ENCODE measurements at regions of chr11 and their contacts with region 1.

Region 1: GRCh38 chr11:68257475-68258362 is 14.1 kb downstream of the C11orf24 start:
- DNase-seq: peak; percentile 97
- ATAC-seq: peak; percentile 97
- H3K4me3 Mint-ChIP-seq: no peak overlapping the region
- H3K27ac Mint-ChIP-seq: no peak overlapping the region
- H3K4me1 Mint-ChIP-seq: peaks cover 3% of the 10 kb centered on the region
- H3K27me3 Mint-ChIP-seq: no peaks in the 10 kb centered on the region

Region 2: GRCh38 chr11:67732045-67732787 is 525.5 kb before region 1 on chr11:
- CTCF ChIA-PET with region 1: no interaction called
- POLR2A ChIA-PET with region 1: no interaction called
- intact Hi-C with region 1: no loop called
- DNase-seq: peak; percentile 72
- ATAC-seq: peak; percentile 90
- H3K4me3 Mint-ChIP-seq: no peak overlapping the region
- H3K27ac Mint-ChIP-seq: no peak overlapping the region
- H3K4me1 Mint-ChIP-seq: peaks cover 14% of the 10 kb centered on the region
- H3K27me3 Mint-ChIP-seq: peaks cover 19% of the 10 kb centered on the region

Region 3: DNA sequence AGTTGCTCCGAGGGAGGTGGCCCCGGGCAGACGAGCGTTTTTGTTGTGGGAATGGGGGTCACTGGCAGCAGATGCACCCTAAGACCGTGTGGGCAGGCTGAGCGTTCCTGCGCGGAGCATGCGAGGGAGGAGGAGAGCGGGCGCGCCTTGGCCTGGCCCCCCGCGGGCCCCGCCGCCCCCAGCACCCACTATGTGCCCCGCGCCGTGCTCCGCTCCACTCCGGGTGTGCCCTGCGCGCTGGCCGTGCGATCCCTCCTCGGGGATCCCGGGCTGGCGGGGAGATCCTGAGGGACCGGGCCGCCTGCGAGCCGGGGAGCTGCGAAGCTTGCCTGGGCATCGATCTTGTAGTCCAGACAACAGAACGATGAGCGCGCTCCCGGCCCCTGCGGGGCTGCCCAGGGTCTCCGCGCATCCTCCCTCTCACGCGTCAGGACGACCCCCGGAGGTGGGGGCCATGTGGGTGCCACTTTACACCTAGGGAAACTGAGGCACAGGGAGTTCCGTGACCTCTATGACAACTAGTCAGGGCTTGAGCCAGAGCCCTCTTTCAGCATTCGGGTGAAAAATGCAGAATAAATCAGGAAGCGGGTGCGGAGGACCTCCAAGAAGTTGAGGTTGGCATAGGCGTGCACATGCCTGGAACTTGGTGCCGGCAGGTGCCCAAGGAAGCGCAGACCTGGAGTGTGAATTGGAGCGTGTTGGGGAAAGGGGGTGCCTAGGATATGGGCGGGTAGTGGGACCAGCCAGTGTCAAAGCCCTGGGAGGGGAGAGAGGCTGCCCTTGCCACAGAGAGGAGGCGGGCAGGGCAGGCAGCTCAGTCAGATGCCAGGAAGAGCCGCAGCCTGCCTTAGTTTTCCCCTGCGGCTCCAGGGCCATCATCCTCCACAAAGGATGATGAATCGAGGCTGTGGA is 43.3 kb before region 1 on chr11:
- CTCF ChIA-PET with region 1: no interaction called
- POLR2A ChIA-PET with region 1: no interaction called
- intact Hi-C with region 1: no loop called
- DNase-seq: peak; percentile 32
- ATAC-seq: peak; percentile 5
- H3K4me3 Mint-ChIP-seq: peak overlapping the region; percentile 71
- H3K27ac Mint-ChIP-seq: no peak overlapping the region
- H3K4me1 Mint-ChIP-seq: peaks cover 41% of the 10 kb centered on the region
- H3K27me3 Mint-ChIP-seq: peaks cover 2% of the 10 kb centered on the region

Region 4: DNA sequence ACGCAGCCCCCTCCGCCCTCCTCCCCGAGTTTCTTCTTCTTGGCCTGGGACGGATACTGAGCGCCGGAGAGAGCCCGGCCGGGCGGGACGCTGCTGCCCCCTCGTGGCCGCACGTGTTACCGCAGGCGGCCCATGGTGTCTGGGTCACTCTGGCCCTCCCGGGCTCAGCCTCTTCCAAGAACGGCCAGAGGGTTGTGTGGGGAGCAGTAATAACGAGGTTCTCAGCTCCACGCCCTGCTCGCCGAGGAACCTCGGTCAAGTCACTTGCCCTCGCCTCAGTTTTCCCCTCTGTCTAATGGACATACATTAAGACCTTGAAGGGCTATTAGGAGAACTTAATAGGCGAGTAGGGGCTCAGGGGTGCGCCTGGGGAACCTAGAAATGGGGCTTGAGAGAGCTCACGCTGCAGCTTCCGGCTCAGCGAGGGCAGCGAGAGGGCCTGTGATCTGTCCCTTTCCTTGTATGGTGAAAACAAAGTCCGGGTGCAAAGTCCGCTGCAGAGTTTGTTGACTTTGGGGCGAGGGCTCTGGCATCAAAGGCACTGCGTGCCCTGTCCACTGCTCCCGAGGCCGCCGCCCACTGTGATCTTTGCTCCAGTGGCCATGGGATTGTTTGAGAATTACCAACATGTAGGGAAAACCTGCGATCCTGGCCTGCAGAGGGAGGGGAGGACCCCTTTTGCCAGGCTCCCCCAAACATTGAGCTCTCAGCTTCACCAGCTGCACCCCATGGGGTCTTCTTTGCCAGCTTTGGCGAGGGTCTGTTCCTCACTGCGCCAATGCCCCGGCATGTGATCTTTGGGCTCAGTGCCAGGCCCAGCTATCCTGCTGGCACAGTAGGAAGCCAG is 40.3 kb after region 1 on chr11:
- CTCF ChIA-PET with region 1: interaction called, 110 read pairs
- POLR2A ChIA-PET with region 1: no interaction called
- intact Hi-C with region 1: loop called (anchors 1 kb)
- DNase-seq: peak; percentile 83
- ATAC-seq: peak; percentile 98
- H3K4me3 Mint-ChIP-seq: no peak overlapping the region
- H3K27ac Mint-ChIP-seq: no peak overlapping the region
- H3K4me1 Mint-ChIP-seq: no peaks in the 10 kb centered on the region
- H3K27me3 Mint-ChIP-seq: no peaks in the 10 kb centered on the region

Region 5: DNA sequence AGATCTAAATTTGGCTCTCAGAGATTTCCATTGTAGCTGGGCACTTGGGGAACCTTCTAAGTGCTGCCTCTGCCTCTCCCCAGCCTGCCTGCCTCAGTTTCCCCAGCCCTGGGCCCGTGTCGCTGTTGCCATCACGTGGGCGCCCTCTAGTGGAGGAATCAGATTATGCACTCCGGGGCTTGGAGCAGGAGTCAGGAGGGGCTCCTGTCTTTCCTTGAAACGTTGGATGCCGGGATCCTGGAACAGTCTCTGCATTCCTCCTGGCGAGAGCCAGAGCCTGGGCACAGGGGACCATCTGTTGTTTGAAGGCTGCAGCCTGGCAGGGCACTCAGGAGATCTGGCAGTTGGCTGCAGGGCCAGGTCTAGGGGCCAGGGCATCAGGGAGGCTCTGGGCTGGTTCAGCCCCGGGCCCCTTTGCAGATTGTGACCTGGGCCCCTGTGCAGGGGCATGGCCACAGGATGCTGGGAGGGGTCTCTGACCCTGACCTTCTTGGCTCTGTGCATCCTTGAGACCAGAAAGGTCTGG is 126.3 kb after region 1 on chr11:
- CTCF ChIA-PET with region 1: interaction called, 18 read pairs
- POLR2A ChIA-PET with region 1: no interaction called
- intact Hi-C with region 1: loop called (anchors 1 to 5 kb)
- DNase-seq: peak; percentile 82
- ATAC-seq: peak; percentile 53
- H3K4me3 Mint-ChIP-seq: no peak overlapping the region
- H3K27ac Mint-ChIP-seq: no peak overlapping the region
- H3K4me1 Mint-ChIP-seq: peaks cover 10% of the 10 kb centered on the region
- H3K27me3 Mint-ChIP-seq: peaks cover 2% of the 10 kb centered on the region

Region 6: GRCh38 chr11:68447015-68447801 is 189.5 kb after region 1 on chr11:
- CTCF ChIA-PET with region 1: interaction called, 3 read pairs
- POLR2A ChIA-PET with region 1: no interaction called
- intact Hi-C with region 1: loop called (anchors 1 kb)
- DNase-seq: peak; percentile 88
- ATAC-seq: peak; percentile 99
- H3K4me3 Mint-ChIP-seq: no peak overlapping the region
- H3K27ac Mint-ChIP-seq: no peak overlapping the region
- H3K4me1 Mint-ChIP-seq: peaks cover 8% of the 10 kb centered on the region
- H3K27me3 Mint-ChIP-seq: no peaks in the 10 kb centered on the region

Measured in activated CD4-positive, alpha-beta T cell treated with anti-CD3 and anti-CD28 coated beads for 36 hours (primary cell).